ENCODE measurements at regions of chr13 and their contacts with region 1.

Region 1: DNA sequence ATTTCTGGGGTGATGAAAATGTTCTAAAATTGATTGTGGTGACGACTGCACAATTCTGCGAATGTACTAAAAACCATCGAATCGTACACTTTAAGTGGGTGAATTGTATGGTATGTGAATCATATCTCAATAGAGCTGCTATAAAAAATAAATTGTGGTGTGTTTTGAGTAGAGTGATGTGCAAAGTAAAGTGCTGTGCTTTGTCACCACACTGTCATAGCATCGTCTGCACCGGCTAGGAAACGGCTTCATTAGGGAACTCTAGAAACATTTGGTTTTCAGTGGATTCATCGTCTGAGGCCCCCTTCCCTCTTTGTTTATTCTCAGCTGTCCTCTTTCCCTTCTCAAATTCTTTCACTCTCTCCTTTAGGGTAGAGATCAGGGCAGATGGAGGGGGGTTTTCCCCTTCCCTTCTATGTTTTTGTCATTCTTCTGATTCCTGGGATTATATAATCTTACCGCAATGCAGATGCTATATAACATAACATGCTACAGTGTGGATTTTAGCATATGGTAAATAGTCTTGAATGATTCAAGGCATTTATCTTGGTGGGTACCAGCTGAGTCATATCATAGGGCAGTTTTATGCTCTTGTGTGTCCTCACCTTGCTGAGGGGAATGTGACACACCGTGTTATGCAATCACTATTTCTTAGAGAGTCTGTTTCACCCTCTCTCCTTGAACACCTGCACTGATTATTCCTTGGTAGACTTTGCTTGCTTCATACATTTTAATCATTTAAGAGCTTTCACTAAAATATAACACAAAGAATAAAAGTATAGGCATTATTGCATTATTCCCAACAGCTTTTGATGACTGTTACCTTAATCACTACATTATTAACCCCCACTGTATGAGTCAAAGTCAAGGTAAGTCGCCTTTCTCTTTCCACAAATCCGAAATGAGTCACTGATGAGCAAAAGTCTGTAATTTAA is 239.4 kb downstream of the DCLK1 start:
- DNase-seq: peak; percentile 5
- ATAC-seq: no peak
- H3K4me3 ChIP-seq: no peak overlapping the region
- H3K27ac ChIP-seq: no peak overlapping the region
- H3K4me1 ChIP-seq: no peaks in the 10 kb centered on the region
- H3K27me3 ChIP-seq: no peaks in the 10 kb centered on the region
- CTCF ChIP-seq: no peak

Region 2: DNA sequence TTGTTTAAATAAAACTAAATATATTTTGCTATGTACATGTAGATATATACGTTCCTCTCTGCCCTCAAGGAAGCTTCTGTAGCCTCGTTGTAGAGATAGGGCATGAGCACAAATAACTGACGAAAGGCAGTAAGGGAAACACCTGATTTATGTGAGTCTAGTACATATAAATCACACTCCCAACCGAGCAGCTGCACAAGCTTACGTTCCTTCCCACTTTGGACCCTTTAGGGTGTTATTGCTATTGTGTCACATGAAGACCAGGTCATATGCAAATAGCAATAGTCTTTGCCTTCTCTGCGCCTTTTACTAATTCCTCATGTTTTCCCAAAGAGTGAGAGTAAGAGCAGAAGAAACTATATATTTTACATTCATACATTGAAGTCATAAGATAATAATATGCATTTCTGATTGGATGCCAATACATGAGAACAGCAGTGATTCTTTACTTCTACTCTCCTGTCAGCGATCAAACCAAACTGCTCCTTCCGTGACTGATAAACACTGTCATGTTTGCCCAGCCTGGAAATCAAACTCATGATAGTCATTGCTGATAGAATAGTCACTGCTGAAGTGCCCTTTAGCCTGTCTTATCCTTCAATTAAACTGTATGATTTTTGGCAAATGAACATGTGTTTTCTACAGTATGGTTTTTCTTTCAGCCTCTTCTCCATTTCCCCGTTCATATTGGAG is 288.0 kb before region 1 on chr13:
- CTCF ChIA-PET with region 1: no interaction called
- POLR2A ChIA-PET with region 1: no interaction called
- in situ Hi-C with region 1: no loop called
- intact Hi-C with region 1: no loop called
- DNase-seq: no peak
- ATAC-seq: no peak
- H3K4me3 ChIP-seq: no peak overlapping the region
- H3K27ac ChIP-seq: no peak overlapping the region
- H3K4me1 ChIP-seq: no peaks in the 10 kb centered on the region
- H3K27me3 ChIP-seq: no peaks in the 10 kb centered on the region
- CTCF ChIP-seq: no peak

Region 3: GRCh38 chr13:35699805-35700510 is 191.8 kb before region 1 on chr13:
- CTCF ChIA-PET with region 1: no interaction called
- POLR2A ChIA-PET with region 1: no interaction called
- in situ Hi-C with region 1: no loop called
- intact Hi-C with region 1: no loop called
- DNase-seq: no peak
- ATAC-seq: no peak
- H3K4me3 ChIP-seq: no peak overlapping the region
- H3K27ac ChIP-seq: no peak overlapping the region
- H3K4me1 ChIP-seq: no peaks in the 10 kb centered on the region; the same call in 1 of the 2 replicates
- H3K27me3 ChIP-seq: no peaks in the 10 kb centered on the region
- CTCF ChIP-seq: no peak

Region 4: GRCh38 chr13:35874704-35875103 is 17.1 kb before region 1 on chr13:
- CTCF ChIA-PET with region 1: no interaction called
- POLR2A ChIA-PET with region 1: no interaction called
- in situ Hi-C with region 1: no loop called
- intact Hi-C with region 1: loop called (anchors 2 kb)
- DNase-seq: no peak
- ATAC-seq: no peak
- H3K4me3 ChIP-seq: no peak overlapping the region
- H3K27ac ChIP-seq: no peak overlapping the region
- H3K4me1 ChIP-seq: no peaks in the 10 kb centered on the region
- H3K27me3 ChIP-seq: no peaks in the 10 kb centered on the region
- CTCF ChIP-seq: no peak

Measured in Panc1 (cell line).